SK-N-SH (cell line): ENCODE measurements at regions of chr7 and their contacts with region 1.

Region 1: GRCh38 chr7:13293264-13294002 is 606.0 kb downstream of the ARL4A start:
- DNase-seq: no peak
- H3K4me3 ChIP-seq: no peak overlapping the region
- H3K27ac ChIP-seq: peak overlapping the region; percentile 2 to 47; a peak in 1 of 4 replicates
- H3K4me1 ChIP-seq: peaks cover 0 to 3% of the 10 kb centered on the region in 2 experiments; a peak in 2 of 4 replicates
- H3K27me3 ChIP-seq: no peaks in the 10 kb centered on the region
- CTCF ChIP-seq: no peak
- EP300 ChIP-seq: no peak
- RAD21 ChIP-seq: no peak

Region 2: DNA sequence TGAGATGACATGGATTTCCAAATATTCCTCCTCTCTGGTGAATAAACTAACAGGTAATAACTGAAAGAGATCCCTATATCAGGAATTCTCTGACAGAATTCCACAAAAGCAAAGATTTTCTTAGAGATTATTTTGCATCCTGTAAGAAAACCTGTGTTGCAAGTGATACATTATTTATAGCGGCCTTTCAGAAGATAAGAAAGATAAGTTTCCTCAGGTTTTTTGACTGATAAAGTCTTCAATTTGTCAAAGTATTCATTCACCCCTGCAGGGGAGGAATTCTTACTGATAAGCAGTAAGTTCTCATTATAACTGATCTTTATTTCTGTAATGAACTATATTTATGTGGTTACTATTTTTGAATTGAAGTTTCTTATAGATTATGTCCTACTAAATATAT is 52.0 kb before region 1 on chr7:
- CTCF ChIA-PET with region 1: no interaction called
- POLR2A ChIA-PET with region 1: no interaction called
- DNase-seq: no peak
- H3K4me3 ChIP-seq: no peak overlapping the region
- H3K27ac ChIP-seq: no peak overlapping the region
- H3K4me1 ChIP-seq: no peaks in the 10 kb centered on the region; a peak in 1 of 4 replicates
- H3K27me3 ChIP-seq: no peaks in the 10 kb centered on the region
- CTCF ChIP-seq: no peak
- EP300 ChIP-seq: no peak
- RAD21 ChIP-seq: no peak

Region 3: GRCh38 chr7:13279854-13280435 is 13.5 kb before region 1 on chr7:
- CTCF ChIA-PET with region 1: interaction called, 12 read pairs
- POLR2A ChIA-PET with region 1: no interaction called
- DNase-seq: peak; percentile 23
- H3K4me3 ChIP-seq: no peak overlapping the region
- H3K27ac ChIP-seq: no peak overlapping the region
- H3K4me1 ChIP-seq: no peaks in the 10 kb centered on the region
- H3K27me3 ChIP-seq: no peaks in the 10 kb centered on the region; the same call in 1 of the 2 replicates
- CTCF ChIP-seq: peak; percentile 79
- EP300 ChIP-seq: no peak
- RAD21 ChIP-seq: peak; percentile 73